A673 (cell line): ENCODE measurements at regions of chr17 and their contacts with region 1.

Region 1: DNA sequence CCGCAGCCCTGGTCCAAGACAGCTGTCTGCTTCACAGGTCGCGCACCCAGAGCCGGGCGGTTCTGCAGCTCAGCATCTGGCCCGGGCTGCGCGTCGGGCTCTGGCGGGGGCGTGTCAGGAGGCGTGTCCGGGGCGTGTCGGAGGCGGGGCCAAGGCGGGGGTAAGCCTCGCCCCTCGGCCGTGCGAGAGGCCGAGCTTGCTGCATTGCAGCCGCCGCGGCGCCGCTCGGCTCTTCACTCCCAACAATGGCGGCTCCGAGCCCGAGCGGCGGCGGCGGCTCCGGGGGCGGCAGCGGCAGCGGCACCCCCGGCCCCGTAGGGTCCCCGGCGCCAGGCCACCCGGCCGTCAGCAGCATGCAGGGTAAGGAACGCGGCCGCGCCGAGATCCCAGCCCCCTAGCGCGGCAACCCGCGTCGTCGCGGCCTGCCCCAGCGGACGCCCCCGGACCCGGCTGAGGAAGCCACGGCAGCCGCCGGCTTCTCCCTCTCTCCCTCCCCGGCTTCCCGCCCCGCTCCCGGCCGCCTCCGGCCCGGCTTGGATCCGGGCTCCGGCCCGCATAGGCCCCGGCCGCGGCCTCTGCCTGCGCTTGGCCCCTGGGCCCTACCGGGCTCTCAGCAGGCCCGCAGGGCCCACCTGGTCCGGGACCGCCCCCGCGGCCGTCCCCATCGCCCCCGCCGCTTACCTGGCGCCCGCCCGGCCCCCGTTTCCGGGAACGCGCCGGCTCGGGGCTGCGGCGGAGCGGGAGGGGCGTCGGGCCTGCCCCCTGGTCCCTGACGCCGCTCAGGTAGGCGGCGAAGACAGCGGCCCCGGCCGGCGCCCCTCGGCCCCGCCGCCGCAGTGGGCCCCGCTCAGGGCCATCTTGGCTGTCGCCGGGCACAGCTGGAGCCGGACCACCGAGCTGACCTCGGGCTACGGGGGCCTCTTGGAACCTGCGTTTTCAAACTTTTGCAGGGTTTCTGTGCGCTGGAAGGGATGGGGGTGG is at the start of gene MAP2K4:
- DNase-seq: peak; percentile 91
- H3K4me3 ChIP-seq: peak within 1 kb of the TSS; percentile 83
- H3K27ac ChIP-seq: peak within 1 kb of the TSS; percentile 92
- H3K4me1 ChIP-seq: peaks cover 20% of the 10 kb centered on the region
- H3K27me3 ChIP-seq: no peaks in the 10 kb centered on the region
- CTCF ChIP-seq: no peak
- total RNA-seq, gene MAP2K4: 32.1 and 41.2 TPM in 2 replicates

Region 2: DNA sequence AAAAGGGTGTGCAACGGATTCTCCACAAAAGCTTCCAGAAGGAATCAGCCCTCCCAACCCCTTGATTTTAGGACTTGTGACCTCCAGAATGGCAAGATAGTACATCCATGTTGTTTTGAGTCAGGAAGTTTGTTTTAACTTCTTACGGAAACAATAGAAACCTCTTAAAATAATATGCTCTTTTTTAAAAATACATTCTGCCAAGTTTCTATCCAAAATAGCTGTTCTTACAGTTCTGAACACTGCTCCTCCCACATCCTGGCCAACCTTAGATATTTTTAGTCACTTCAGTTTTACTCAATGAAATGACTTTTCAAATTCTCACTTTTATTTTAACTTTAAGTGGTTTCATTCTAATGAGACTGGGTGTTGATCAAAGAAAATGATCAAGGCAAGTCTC is 180.1 kb before region 1 on chr17:
- CTCF ChIA-PET with region 1: no interaction called
- POLR2A ChIA-PET with region 1: no interaction called
- intact Hi-C with region 1: no loop called
- DNase-seq: no peak
- H3K4me3 ChIP-seq: no peak overlapping the region
- H3K27ac ChIP-seq: no peak overlapping the region
- H3K4me1 ChIP-seq: no peaks in the 10 kb centered on the region
- H3K27me3 ChIP-seq: no peaks in the 10 kb centered on the region
- CTCF ChIP-seq: no peak

Region 3: DNA sequence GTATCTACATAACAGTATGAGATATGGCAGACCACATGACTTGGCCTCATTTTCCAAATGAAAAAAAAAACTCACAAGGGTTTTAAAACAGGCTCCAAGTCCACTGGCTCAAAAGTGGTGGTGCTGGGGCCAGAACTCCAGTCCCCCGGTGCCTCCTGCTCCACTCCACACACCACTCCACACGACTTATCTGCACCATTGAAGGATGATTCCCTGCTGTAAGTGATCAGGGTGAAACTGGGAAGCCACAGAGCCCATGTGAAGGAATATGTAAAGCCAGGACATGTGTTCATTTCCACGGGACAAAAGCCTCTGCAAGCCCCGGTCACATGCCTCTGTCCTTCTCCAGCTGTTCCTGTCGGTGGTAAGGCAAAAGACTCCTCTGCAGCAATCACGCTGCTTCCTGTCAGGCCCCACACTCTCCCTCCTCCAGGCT is 120.9 kb before region 1 on chr17:
- CTCF ChIA-PET with region 1: no interaction called
- POLR2A ChIA-PET with region 1: interaction called, 11 read pairs
- intact Hi-C with region 1: no loop called
- DNase-seq: no peak
- H3K4me3 ChIP-seq: no peak overlapping the region
- H3K27ac ChIP-seq: peak overlapping the region; percentile 17
- H3K4me1 ChIP-seq: no peaks in the 10 kb centered on the region
- H3K27me3 ChIP-seq: no peaks in the 10 kb centered on the region
- CTCF ChIP-seq: no peak

Region 4: GRCh38 chr17:12078791-12079190 is 57.9 kb after region 1 on chr17:
- CTCF ChIA-PET with region 1: no interaction called
- POLR2A ChIA-PET with region 1: no interaction called
- intact Hi-C with region 1: no loop called
- DNase-seq: no peak
- H3K4me3 ChIP-seq: no peak overlapping the region
- H3K27ac ChIP-seq: no peak overlapping the region
- H3K4me1 ChIP-seq: no peaks in the 10 kb centered on the region
- H3K27me3 ChIP-seq: no peaks in the 10 kb centered on the region
- CTCF ChIP-seq: no peak